GM10248 (cell line): ENCODE measurements at regions of chr3 and their contacts with region 1.

Region 1: DNA sequence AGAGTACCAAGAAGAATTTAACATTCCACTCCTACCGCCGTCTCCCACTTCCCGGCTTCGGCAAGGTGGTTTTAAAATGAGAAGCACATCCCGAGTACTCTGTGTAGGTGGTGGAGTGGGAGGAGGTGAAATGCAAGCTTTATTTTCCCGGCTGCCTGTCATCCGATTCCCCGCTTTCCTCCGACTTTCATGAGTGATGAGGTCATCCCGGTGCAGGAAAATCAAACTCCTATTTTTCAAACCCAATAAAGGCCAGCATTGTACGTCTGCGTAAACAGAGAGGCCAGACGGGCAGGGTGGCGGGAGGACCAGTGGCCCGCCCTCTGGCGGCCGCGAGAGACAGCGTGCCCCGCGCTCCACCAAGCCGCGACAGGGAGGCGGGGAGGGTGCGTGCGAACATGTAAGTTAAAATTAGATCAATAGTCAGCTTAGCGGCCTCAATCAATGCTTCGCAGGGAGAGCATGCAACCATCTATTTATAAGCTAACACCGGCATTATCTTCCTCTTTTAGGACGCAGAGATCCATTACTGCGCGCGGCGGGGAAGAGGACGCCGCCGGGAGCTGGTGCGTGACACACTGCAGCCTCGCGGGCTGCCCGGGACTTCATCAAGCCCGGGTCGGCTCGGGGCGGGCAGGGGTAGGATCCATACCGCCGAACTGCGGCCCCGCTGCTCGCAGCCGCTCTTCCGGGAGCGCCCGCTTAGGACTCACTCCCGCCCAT is 163.3 kb downstream of the CD47 start:
- DNase-seq: peak; percentile 86
- CTCF ChIP-seq: peak; percentile 93

Region 2: DNA sequence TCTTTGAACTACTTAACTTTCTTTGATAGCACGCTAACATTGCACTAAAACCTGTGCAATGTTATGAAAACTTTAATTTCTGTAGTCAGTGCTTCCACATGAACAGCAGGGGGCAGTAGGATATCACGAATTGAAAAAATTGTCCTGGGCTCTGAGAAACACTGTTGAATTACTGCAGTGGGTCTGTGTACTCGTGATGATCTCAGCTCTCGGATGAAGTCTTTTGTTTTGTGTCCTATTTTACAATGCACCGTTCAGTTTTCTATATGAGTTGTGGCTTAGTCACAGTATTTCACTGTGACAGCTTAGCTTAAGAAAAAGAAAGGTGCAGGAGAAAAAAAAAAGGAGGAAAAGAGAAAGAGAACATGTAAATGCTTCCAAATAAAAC is 691.6 kb before region 1 on chr3:
- CTCF ChIA-PET with region 1: interaction called, 19 read pairs
- POLR2A ChIA-PET with region 1: no interaction called
- DNase-seq: peak; percentile 61
- CTCF ChIP-seq: peak; percentile 84

Region 3: GRCh38 chr3:107660306-107660976 is 267.1 kb before region 1 on chr3:
- CTCF ChIA-PET with region 1: interaction called, 14 read pairs
- POLR2A ChIA-PET with region 1: no interaction called
- DNase-seq: no peak
- CTCF ChIP-seq: peak; percentile 49

Region 4: DNA sequence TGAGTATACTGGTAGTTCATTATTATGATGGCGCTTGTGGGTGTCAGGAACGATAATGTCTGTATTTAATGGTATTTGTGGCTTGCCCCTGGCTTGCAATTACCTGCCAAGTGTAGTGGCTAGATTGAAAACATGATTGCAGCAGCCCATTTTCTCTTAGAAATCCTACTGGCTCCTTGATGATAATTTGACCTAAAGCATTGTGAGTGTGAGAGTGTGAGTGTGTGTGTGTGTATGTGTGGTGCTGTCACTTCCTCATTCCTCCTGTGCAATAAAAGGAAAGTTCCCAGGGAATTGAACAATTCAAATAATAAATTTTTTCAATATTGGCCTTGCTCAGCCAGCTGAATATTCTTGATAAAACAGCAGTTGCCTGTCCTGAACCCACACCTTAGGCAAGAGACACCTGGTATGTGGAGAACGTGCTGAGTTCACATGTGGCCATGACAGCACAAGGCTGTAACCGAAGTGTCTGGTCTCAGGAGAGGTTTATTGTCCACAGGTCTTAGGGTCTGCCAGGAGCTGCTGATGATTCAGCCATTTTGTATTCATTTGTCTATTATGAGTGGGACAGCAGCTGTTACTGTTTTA is 30.0 kb before region 1 on chr3:
- CTCF ChIA-PET with region 1: interaction called, 11 read pairs
- POLR2A ChIA-PET with region 1: no interaction called
- DNase-seq: no peak
- CTCF ChIP-seq: no peak

Region 5: GRCh38 chr3:107916166-107916565 is 11.4 kb before region 1 on chr3:
- CTCF ChIA-PET with region 1: interaction called, 21 read pairs
- POLR2A ChIA-PET with region 1: no interaction called
- DNase-seq: no peak
- CTCF ChIP-seq: no peak

Region 6: GRCh38 chr3:107943786-107944523 is 16.4 kb after region 1 on chr3:
- CTCF ChIA-PET with region 1: interaction called, 19 read pairs
- POLR2A ChIA-PET with region 1: no interaction called
- DNase-seq: no peak
- CTCF ChIP-seq: no peak